Ovary (tissue), 10 donors: ENCODE measurements at regions of chr1 and their contacts with region 1.

Region 1: DNA sequence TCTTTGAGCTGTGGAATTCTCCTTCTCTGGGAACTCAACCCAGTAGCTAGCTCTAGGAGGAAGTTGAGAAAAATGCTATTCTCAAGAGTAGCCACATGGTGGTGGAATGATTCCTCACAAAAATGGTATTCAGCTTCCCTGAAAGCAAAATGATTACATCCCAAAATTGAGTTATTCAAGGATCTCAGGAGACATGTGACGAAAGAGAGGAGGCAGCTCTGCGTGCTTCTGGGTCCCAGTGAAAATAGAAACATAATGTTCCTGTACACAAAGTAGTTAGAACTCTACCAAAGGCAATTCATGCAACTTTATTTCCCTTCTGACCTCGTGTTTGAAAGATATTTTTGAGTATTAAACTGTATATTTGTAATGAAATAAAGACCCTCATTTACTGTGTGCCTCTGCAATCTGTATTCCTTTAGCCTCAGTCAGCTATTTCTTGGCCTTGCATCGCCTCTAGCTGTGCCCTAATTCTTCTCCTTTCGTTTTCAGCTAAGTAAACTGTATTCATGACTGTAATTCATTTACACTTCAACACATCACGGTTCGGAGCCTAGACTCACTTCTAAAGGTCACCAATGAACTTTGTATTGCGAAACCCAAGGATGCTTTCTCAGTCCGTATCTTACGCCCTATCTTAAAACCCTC is 167.3 kb downstream of the FASLG start:
- DNase-seq: peak in 1 of 5 donors; percentile 19
- H3K4me3 ChIP-seq: no peak overlapping the region
- H3K27ac ChIP-seq: peak overlapping the region in 1 of 2 donors; percentile 42
- H3K4me1 ChIP-seq: no peaks in the 10 kb centered on the region
- H3K27me3 ChIP-seq: no peaks in the 10 kb centered on the region
- CTCF ChIP-seq: peak in 1 of 3 donors; percentile 50
- EP300 ChIP-seq: no peak
- POLR2A ChIP-seq: no peak

Region 2: GRCh38 chr1:172733815-172734214 is 92.4 kb before region 1 on chr1:
- intact Hi-C with region 1: no loop called
- DNase-seq: no peak
- H3K4me3 ChIP-seq: no peak overlapping the region
- H3K27ac ChIP-seq: no peak overlapping the region
- H3K4me1 ChIP-seq: no peaks in the 10 kb centered on the region
- H3K27me3 ChIP-seq: no peaks in the 10 kb centered on the region
- CTCF ChIP-seq: no peak
- EP300 ChIP-seq: no peak
- POLR2A ChIP-seq: no peak

Region 3: DNA sequence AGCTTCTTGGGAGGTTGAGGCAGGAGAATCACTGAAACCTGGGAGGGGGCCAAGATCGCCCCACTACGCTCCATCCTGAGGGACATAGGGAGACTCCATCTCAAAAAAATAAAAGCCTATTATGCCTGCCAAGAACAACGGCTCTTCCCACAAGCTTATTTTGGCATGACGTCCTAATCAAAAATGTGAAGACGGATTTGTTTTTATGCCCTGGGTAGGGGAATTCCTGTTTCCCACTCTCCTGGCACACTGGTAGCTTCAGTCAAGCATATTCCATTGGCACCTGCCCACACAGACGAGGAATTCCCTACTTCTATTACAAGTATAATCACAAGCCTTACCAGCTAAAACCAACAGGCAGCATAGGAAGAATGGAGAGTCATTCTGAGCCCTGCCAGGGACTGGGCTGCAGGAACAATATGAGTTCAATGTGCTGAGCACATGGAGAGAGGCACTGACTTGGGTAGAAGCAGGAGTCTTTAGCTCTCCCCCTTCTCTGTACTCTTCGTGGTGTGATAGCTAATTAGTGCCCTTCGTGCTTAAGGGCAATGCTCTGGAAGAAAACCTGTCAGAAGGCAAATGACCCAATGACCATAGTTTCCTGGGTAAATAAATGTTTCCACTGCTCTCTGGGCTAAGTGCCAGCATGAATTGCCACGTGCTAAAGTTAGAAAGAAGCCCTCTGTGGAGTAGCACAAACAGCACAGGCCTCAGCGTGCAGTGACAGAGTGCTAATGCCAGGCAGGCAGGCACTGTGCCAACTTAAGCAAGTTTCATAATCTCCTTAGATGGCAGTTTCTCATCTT is 364.1 kb after region 1 on chr1:
- intact Hi-C with region 1: loop called in 1 of 4 experiments (anchors 10 kb)
- DNase-seq: peak; percentile 20 to 60 (median 56)
- H3K4me3 ChIP-seq: no peak overlapping the region
- H3K27ac ChIP-seq: no peak overlapping the region
- H3K4me1 ChIP-seq: peaks cover 10% of the 10 kb centered on the region
- H3K27me3 ChIP-seq: no peaks in the 10 kb centered on the region
- CTCF ChIP-seq: no peak
- EP300 ChIP-seq: no peak
- POLR2A ChIP-seq: no peak